Calu3 (cell line): ENCODE measurements at regions of chr7 and their contacts with region 1.

Region 1: GRCh38 chr7:116671681-116672595 is at the start of gene MET:
- DNase-seq: peak; percentile 94
- H3K4me3 Mint-ChIP-seq: peak within 1 kb of the TSS; percentile 74
- H3K27ac Mint-ChIP-seq: peak within 1 kb of the TSS; percentile 92
- H3K4me1 Mint-ChIP-seq: peaks cover 27% of the 10 kb centered on the region
- H3K27me3 Mint-ChIP-seq: no peaks in the 10 kb centered on the region
- CTCF ChIP-seq: peak; percentile 52
- total RNA-seq, gene MET: 242 and 249 TPM in 2 replicates

Region 2: GRCh38 chr7:116588641-116589594 is 83.0 kb before region 1 on chr7:
- CTCF ChIA-PET with region 1: interaction called, 13 read pairs
- intact Hi-C with region 1: loop called (anchors 5 kb)
- DNase-seq: no peak
- H3K4me3 Mint-ChIP-seq: no peak overlapping the region
- H3K27ac Mint-ChIP-seq: no peak overlapping the region
- H3K4me1 Mint-ChIP-seq: peaks cover 37% of the 10 kb centered on the region
- H3K27me3 Mint-ChIP-seq: no peaks in the 10 kb centered on the region
- CTCF ChIP-seq: peak; percentile 47

Region 3: GRCh38 chr7:116653204-116653603 is 18.7 kb before region 1 on chr7:
- CTCF ChIA-PET with region 1: interaction called, 4 read pairs
- intact Hi-C with region 1: loop called (anchors 2 kb)
- DNase-seq: peak; percentile 49
- H3K4me3 Mint-ChIP-seq: no peak overlapping the region
- H3K27ac Mint-ChIP-seq: no peak overlapping the region
- H3K4me1 Mint-ChIP-seq: peaks cover 19% of the 10 kb centered on the region
- H3K27me3 Mint-ChIP-seq: no peaks in the 10 kb centered on the region
- CTCF ChIP-seq: no peak

Region 4: DNA sequence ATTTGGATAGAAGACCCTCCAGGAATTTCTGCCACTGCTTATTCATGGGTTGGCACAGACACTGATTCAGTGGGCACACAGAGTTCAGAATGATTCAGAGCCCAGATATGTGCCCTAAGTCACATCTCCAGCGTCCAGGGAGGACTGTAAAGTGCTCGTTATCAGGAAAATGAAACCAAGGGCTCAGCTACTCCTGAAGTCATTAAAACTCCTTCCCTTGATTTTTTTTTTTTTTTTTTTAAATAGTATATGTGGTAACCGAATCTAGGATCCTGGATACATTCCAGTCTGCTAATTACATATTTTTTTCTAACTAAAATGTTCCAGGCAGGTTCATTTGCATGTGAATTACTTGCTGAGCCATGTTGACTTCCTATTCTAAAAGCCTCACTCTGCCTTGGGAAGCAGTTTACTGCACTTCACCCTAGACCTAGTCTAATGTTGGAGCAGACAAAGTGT is 34.8 kb after region 1 on chr7:
- CTCF ChIA-PET with region 1: interaction called, 7 read pairs
- intact Hi-C with region 1: loop called (anchors 2 kb)
- DNase-seq: peak; percentile 45
- H3K4me3 Mint-ChIP-seq: peak overlapping the region; percentile 55
- H3K27ac Mint-ChIP-seq: peak overlapping the region; percentile 82
- H3K4me1 Mint-ChIP-seq: peaks cover 82% of the 10 kb centered on the region
- H3K27me3 Mint-ChIP-seq: no peaks in the 10 kb centered on the region
- CTCF ChIP-seq: no peak

Region 5: GRCh38 chr7:116762971-116763370 is 91.0 kb after region 1 on chr7:
- CTCF ChIA-PET with region 1: no interaction called
- intact Hi-C with region 1: no loop called
- DNase-seq: no peak
- H3K4me3 Mint-ChIP-seq: no peak overlapping the region
- H3K27ac Mint-ChIP-seq: no peak overlapping the region
- H3K4me1 Mint-ChIP-seq: peaks cover 22% of the 10 kb centered on the region
- H3K27me3 Mint-ChIP-seq: no peaks in the 10 kb centered on the region
- CTCF ChIP-seq: no peak

Region 6: GRCh38 chr7:116776610-116777289 is 104.8 kb after region 1 on chr7:
- CTCF ChIA-PET with region 1: interaction called, 6 read pairs
- intact Hi-C with region 1: loop called (anchors 1 kb)
- DNase-seq: peak; percentile 67
- H3K4me3 Mint-ChIP-seq: peak overlapping the region; percentile 20
- H3K27ac Mint-ChIP-seq: peak overlapping the region; percentile 92
- H3K4me1 Mint-ChIP-seq: peaks cover 89% of the 10 kb centered on the region
- H3K27me3 Mint-ChIP-seq: no peaks in the 10 kb centered on the region
- CTCF ChIP-seq: no peak

Region 7: GRCh38 chr7:116862234-116862950 is 190.5 kb after region 1 on chr7 and contains the start of gene CAPZA2:
- CTCF ChIA-PET with region 1: interaction called, 10 read pairs
- intact Hi-C with region 1: no loop called
- DNase-seq: peak; percentile 97
- H3K4me3 Mint-ChIP-seq: peak within 1 kb of the TSS; percentile 88
- H3K27ac Mint-ChIP-seq: peak within 1 kb of the TSS; percentile 94
- H3K4me1 Mint-ChIP-seq: peaks cover 23% of the 10 kb centered on the region
- H3K27me3 Mint-ChIP-seq: no peaks in the 10 kb centered on the region
- CTCF ChIP-seq: peak; percentile 50
- total RNA-seq, gene CAPZA2: 209 TPM in 2 replicates